GM13976 (cell line): ENCODE measurements at regions of chr3 and their contacts with region 1.

Region 1: GRCh38 chr3:72821161-72821781 is 27.0 kb downstream of the SHQ1 start:
- DNase-seq: peak; percentile 24
- CTCF ChIP-seq: no peak

Region 2: GRCh38 chr3:72082186-72082715 is 739.0 kb before region 1 on chr3:
- in situ Hi-C with region 1: loop called (anchors 10 kb)
- DNase-seq: peak; percentile 66
- CTCF ChIP-seq: no peak

Region 3: GRCh38 chr3:72665701-72666443 is 155.4 kb before region 1 on chr3:
- in situ Hi-C with region 1: loop called (anchors 10 kb)
- DNase-seq: peak; percentile 68
- CTCF ChIP-seq: peak; percentile 53

Region 4: DNA sequence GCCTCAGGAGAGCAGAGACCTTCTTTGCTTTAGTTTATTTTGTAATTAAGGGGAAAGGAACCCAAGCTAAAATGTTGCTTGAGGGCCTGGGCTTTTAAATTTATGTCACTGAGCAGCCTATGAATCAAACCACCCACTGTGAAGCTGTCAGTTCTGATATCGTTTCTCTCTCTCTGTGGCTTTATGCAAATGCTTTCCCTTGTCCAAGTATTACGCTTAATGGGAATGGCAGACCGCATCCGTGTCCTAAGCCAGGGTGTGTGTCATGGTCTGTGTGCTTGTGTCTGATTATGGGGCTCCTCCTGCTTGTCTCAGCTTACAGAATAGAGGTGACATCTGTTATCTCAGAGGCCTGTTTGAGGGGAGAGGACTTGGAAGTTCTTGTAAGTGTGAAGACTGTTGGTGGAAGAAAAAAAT is 322.6 kb after region 1 on chr3:
- in situ Hi-C with region 1: no loop called
- DNase-seq: no peak
- CTCF ChIP-seq: no peak